Adrenal gland (tissue), 19 donors: ENCODE measurements at regions of chr17 and their contacts with region 1.

Region 1: DNA sequence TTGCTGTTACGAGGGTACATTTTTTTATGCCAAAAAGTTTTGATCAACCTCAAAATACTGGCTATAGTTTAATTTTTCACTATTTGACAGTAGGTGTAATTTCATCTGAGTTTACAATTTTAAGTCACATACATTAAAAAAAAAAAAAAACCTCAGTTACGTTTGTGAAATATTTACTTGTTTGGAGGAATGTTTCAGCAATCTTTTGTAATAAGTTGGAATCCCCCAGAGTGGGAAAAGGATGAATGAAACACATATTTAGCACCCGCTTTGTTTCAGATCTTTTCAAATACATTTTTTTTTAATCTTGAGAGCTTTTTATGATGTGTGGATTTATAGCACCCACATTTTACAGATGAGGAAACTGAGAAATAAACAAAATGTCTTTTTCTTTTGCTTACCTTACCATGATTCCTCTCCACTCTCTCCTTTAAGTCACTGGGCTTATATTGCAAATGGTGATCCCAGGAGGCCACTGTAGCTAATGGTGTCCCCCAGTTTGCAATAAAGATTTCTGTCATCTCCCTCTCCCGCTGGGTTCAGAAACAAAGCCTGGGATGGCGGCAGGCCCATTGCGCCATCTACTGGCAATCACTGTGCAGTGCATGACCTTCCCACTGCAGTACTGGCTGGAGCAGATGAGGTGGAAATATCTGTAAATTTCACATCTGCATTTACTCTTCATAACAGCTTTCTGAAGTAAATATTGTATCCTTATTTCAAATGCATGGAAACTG is 27.7 kb downstream of the TBC1D3B start:
- DNase-seq: peak; percentile 41 to 89 (median 58)
- H3K4me3 ChIP-seq: no peak overlapping the region
- H3K27ac ChIP-seq: no peak overlapping the region
- H3K4me1 ChIP-seq: peaks cover 0 to 3% of the 10 kb centered on the region in 2 donors
- H3K27me3 ChIP-seq: peaks cover 6% of the 10 kb centered on the region
- CTCF ChIP-seq: peak; percentile 86 to 100 (median 97)
- POLR2A ChIP-seq: no peak

Region 2: GRCh38 chr17:35849469-35850348 is 299.0 kb before region 1 on chr17:
- intact Hi-C with region 1: loop called in 1 of 2 experiments (anchors 10 kb)
- DNase-seq: peak; percentile 43 to 82 (median 65)
- H3K4me3 ChIP-seq: no peak overlapping the region
- H3K27ac ChIP-seq: no peak overlapping the region
- H3K4me1 ChIP-seq: peaks cover 9 to 21% of the 10 kb centered on the region in 2 donors
- H3K27me3 ChIP-seq: no peaks in the 10 kb centered on the region
- CTCF ChIP-seq: peak; percentile 63 to 84 (median 70)
- POLR2A ChIP-seq: no peak

Region 3: DNA sequence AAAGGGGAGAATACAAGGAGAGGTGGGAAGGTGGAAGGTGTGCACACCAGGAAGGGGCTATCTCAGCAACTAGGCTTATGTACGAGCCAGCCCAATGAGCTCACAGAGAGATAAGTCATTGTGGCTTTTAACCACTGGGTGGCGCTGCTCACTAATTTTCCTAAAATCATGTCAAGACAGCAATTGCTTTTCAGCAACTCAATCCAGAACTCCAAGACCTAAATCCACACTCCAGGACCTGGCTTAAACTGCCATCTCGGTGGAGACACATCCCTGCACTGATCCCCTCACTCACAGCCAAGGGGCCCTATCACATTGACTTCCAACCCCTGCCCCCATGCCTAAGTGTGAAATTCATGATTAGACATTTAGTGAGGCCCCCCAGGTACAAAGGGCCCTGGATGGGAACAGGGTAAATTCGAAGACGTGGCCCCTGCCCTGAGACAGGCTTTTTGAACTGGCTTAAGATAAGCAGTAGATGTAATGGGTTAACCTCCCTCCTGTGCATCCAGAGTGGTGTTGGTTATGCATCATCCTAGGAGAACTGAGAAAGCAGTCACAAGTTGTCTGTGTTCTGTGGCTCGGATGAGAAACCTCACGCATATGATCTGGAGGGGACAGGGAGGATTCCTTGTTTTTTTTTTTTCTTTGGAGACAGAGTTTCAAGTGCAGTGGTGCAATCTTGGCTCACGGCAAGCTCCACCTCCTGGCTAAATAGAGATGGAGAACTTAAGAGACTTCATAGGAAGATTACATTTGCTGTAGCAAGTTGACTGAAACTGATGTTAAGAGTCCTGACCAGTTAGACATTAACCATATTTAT is 179.0 kb before region 1 on chr17:
- intact Hi-C with region 1: loop called in 1 of 2 experiments (anchors 10 kb)
- DNase-seq: peak; percentile 71 to 94 (median 85)
- H3K4me3 ChIP-seq: no peak overlapping the region
- H3K27ac ChIP-seq: no peak overlapping the region
- H3K4me1 ChIP-seq: peaks cover 0 to 16% of the 10 kb centered on the region in 2 donors
- H3K27me3 ChIP-seq: no peaks in the 10 kb centered on the region
- CTCF ChIP-seq: peak; percentile 83 to 90 (median 86)
- POLR2A ChIP-seq: no peak

Region 4: DNA sequence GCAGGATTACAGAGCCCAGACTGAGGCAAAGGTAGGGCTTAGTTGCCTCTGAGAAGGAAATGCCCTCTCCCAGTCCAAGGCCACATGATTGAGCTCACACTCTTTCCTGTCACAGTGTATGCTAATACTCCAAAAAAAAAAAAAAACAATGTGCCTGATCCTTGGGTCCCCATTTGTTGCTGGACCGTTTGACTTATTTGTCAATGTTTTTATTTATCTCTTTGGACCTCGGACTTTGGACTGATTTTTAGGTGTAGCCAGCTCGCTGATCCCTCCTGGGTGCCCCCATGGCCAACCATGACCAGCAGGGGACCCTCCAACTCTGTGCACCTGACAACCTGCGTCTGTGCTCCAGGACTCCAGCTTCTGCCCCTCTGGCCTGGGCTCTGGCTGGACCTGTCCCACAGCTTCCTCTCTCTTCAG is 166.8 kb before region 1 on chr17:
- intact Hi-C with region 1: loop called (anchors 5 to 10 kb)
- DNase-seq: no peak
- H3K4me3 ChIP-seq: no peak overlapping the region
- H3K27ac ChIP-seq: no peak overlapping the region
- H3K4me1 ChIP-seq: no peaks in the 10 kb centered on the region
- H3K27me3 ChIP-seq: no peaks in the 10 kb centered on the region
- CTCF ChIP-seq: no peak
- POLR2A ChIP-seq: no peak